CD4-positive, alpha-beta T cell (primary cell): ENCODE measurements at regions of chr22 and their contacts with region 1.

Region 1: GRCh38 chr22:20319745-20320658 is at the start of gene DGCR6L:
- DNase-seq: peak; percentile 92 to 99 (median 97)
- ATAC-seq: peak; percentile 71
- H3K4me3 ChIP-seq: peak within 1 kb of the TSS; percentile 70
- H3K4me3 Mint-ChIP-seq: peak within 1 kb of the TSS; percentile 89
- H3K27ac ChIP-seq: peak within 1 kb of the TSS; percentile 24 to 67
- H3K27ac Mint-ChIP-seq: peak within 1 kb of the TSS; percentile 87
- H3K4me1 ChIP-seq: peaks cover 70% of the 10 kb centered on the region
- H3K4me1 Mint-ChIP-seq: peaks cover 61% of the 10 kb centered on the region
- H3K27me3 ChIP-seq: no peaks in the 10 kb centered on the region
- H3K27me3 Mint-ChIP-seq: no peaks in the 10 kb centered on the region
- CTCF ChIP-seq: no peak
- total RNA-seq, gene DGCR6L: 29.1 to 31.2 TPM

Region 2: GRCh38 chr22:20393909-20394691 is 74.1 kb after region 1 on chr22 and contains the start of gene ZNF74:
- CTCF ChIA-PET with region 1: interaction called, 3 read pairs
- POLR2A ChIA-PET with region 1: interaction called, 11 read pairs
- intact Hi-C with region 1: loop called (anchors 2 to 5 kb)
- DNase-seq: peak; percentile 70 to 96 (median 83)
- ATAC-seq: peak; percentile 97
- H3K4me3 ChIP-seq: peak within 1 kb of the TSS; percentile 75
- H3K4me3 Mint-ChIP-seq: peak within 1 kb of the TSS; percentile 86
- H3K27ac ChIP-seq: peak within 1 kb of the TSS; percentile 26 to 64
- H3K27ac Mint-ChIP-seq: peak within 1 kb of the TSS; percentile 86
- H3K4me1 ChIP-seq: peaks cover 28% of the 10 kb centered on the region
- H3K4me1 Mint-ChIP-seq: peaks cover 30% of the 10 kb centered on the region
- H3K27me3 ChIP-seq: no peaks in the 10 kb centered on the region
- H3K27me3 Mint-ChIP-seq: no peaks in the 10 kb centered on the region
- CTCF ChIP-seq: no peak
- total RNA-seq, gene ZNF74: 1.7 to 2.3 TPM

Region 3: DNA sequence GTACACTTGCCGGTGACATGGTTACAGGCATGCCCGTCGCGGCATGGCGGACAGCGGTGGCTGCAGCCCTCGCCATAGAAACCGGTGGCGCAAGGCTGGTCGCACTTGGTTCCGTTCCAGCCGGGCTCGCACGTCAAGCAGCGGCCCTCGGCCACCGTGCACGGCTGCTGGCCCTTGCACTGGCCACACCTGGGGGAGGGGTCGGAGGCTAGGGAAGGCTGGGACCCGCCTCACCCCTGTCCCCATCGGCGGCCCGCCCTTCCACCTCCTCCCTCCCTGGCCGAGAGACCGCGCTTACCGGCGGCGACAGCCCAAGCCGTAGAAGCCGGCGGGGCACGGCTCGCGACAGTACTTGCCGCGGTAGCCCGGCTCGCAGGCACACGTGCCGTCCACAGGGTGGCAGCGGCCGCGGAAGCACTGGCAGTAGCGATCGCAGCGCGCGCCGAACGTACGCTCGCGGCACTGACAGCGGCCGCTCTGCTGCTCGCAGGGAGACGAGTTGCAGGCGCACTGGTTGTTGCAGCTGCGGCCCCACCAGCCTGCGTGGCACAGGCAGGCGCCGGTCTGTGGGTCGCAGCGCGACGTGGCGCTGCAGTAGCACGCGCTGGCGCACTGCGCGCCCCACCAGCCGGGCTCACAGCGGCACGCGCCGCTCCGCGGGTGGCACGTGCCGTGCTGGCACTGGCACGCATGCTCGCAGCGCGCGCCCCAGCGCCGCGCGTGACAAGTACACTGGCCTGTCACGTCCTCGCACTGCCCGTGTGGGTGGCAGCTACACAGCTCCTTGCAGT is 110.9 kb after region 1 on chr22:
- CTCF ChIA-PET with region 1: no interaction called
- POLR2A ChIA-PET with region 1: no interaction called
- intact Hi-C with region 1: no loop called
- DNase-seq: peak; percentile 45 to 88 (median 57)
- ATAC-seq: peak; percentile 64
- H3K4me3 ChIP-seq: peak overlapping the region; percentile 78
- H3K4me3 Mint-ChIP-seq: peak overlapping the region; percentile 79
- H3K27ac ChIP-seq: no peak overlapping the region
- H3K27ac Mint-ChIP-seq: no peak overlapping the region
- H3K4me1 ChIP-seq: peaks cover 46% of the 10 kb centered on the region
- H3K4me1 Mint-ChIP-seq: peaks cover 17% of the 10 kb centered on the region
- H3K27me3 ChIP-seq: peaks cover 34 to 40% of the 10 kb centered on the region in 2 experiments
- H3K27me3 Mint-ChIP-seq: peaks cover 53% of the 10 kb centered on the region
- CTCF ChIP-seq: peak; percentile 54